ENCODE measurements at regions of chr1 and their contacts with region 1.

Region 1: GRCh38 chr1:7902478-7903085 is 38.1 kb downstream of the TNFRSF9 start:
- DNase-seq: peak; percentile 88
- H3K4me3 Mint-ChIP-seq: peak overlapping the region; percentile 55
- H3K27ac Mint-ChIP-seq: no peak overlapping the region
- H3K4me1 Mint-ChIP-seq: peaks cover 16% of the 10 kb centered on the region
- H3K27me3 Mint-ChIP-seq: peaks cover 2% of the 10 kb centered on the region

Region 2: GRCh38 chr1:7808253-7808844 is 94.2 kb before region 1 on chr1:
- intact Hi-C with region 1: loop called (anchors 5 kb)
- DNase-seq: no peak
- H3K4me3 Mint-ChIP-seq: no peak overlapping the region
- H3K27ac Mint-ChIP-seq: no peak overlapping the region
- H3K4me1 Mint-ChIP-seq: no peaks in the 10 kb centered on the region
- H3K27me3 Mint-ChIP-seq: no peaks in the 10 kb centered on the region

Region 3: DNA sequence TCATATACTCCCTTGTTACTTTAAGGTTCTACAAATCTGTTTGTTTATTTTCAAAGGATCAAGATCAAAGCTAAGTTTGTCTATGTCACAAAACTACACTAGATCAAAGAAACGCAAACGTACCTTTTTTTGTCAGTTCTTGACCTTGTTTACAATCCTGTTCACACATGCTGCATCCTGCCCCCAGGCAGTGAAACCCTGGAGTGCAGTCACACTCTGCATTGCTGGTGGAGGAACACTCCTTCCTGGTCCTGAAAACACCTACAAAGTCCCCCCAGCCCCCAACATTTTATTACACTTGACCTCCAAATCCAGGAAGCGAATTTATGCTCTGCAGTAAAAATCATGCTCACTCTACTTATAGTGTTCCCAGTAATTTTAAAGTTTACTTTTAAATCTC is 35.5 kb after region 1 on chr1:
- intact Hi-C with region 1: no loop called
- DNase-seq: no peak
- H3K4me3 Mint-ChIP-seq: peak overlapping the region; percentile 78
- H3K27ac Mint-ChIP-seq: no peak overlapping the region
- H3K4me1 Mint-ChIP-seq: peaks cover 42% of the 10 kb centered on the region
- H3K27me3 Mint-ChIP-seq: peaks cover 18% of the 10 kb centered on the region

Region 4: GRCh38 chr1:7948960-7949359 is 46.4 kb after region 1 on chr1:
- intact Hi-C with region 1: loop called (anchors 1 kb)
- DNase-seq: peak; percentile 83
- H3K4me3 Mint-ChIP-seq: peak overlapping the region; percentile 63
- H3K27ac Mint-ChIP-seq: peak overlapping the region; percentile 79
- H3K4me1 Mint-ChIP-seq: peaks cover 35% of the 10 kb centered on the region
- H3K27me3 Mint-ChIP-seq: no peaks in the 10 kb centered on the region